ENCODE measurements at regions of chr5 and their contacts with region 1.

Region 1: DNA sequence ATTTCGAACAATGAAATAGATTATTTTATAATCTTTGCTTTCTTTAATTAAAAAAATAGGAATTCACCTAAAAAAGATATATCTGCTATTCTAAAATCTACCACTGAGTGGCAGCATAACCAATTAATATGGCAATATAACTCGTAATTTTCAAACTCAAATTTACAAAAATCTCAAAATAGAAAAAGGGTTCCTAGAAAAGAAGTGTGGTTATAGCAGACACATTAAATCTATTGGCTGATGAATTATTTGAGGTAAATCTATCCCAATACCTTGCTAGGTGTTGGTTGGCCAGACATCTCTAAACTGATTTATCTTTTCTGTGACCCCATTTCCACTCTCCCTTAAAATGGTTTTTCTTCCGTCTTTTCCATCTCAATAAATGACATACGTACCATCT is 30.2 kb upstream of the NRG2 start:
- DNase-seq: no peak
- H3K4me3 Mint-ChIP-seq: no peak overlapping the region
- H3K27ac Mint-ChIP-seq: no peak overlapping the region
- H3K4me1 Mint-ChIP-seq: no peaks in the 10 kb centered on the region
- H3K27me3 Mint-ChIP-seq: peaks cover 16% of the 10 kb centered on the region

Region 2: GRCh38 chr5:140038373-140038957 is 34.8 kb before region 1 on chr5:
- CTCF ChIA-PET with region 1: no interaction called
- POLR2A ChIA-PET with region 1: no interaction called
- intact Hi-C with region 1: no loop called
- DNase-seq: no peak
- H3K4me3 Mint-ChIP-seq: no peak overlapping the region
- H3K27ac Mint-ChIP-seq: no peak overlapping the region
- H3K4me1 Mint-ChIP-seq: peaks cover 16% of the 10 kb centered on the region
- H3K27me3 Mint-ChIP-seq: peaks cover 38% of the 10 kb centered on the region

Region 3: DNA sequence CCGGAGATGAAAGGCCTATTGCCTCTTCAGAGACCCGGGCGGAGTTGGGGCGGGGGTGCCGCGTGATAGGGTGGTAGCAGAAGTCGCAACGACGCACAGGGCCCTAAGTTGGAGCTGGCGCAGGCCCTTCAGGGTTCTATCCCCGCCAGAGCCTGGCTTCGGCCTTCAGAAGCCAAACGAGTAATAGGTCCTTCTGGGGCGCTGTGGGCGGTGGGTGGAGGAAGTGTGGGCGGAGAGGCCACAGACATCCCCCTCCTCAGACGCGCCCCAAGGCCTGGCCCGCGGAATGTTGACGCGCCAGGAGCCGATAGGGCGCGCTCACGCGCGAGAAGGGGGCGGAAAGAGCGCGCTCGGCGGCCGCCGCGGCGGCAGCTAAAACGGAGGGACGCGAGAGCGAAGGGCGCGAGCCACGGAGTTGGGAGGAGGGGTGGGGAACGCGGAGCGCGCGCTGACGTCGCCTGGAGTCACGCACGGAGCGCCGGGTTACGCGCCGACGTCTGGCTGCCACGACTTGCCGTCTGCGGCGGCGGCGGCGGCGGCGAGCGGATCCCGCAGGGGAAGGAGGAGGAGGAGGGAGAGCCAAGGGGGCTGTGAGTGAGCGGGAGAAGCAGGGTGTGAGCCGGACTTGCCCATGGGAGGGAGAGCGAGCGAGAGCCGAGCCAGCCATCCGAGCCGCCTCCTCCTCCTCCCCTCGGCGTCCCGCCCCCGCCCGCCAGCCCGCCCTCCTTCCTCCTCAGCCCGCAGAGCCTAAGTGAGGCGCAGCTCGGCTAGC is 34.2 kb after region 1 on chr5:
- CTCF ChIA-PET with region 1: interaction called, 8 read pairs
- POLR2A ChIA-PET with region 1: no interaction called
- intact Hi-C with region 1: loop called (anchors 5 kb)
- DNase-seq: peak; percentile 95
- H3K4me3 Mint-ChIP-seq: peak overlapping the region; percentile 98
- H3K27ac Mint-ChIP-seq: peak overlapping the region; percentile 94
- H3K4me1 Mint-ChIP-seq: peaks cover 43% of the 10 kb centered on the region
- H3K27me3 Mint-ChIP-seq: no peaks in the 10 kb centered on the region

Region 4: DNA sequence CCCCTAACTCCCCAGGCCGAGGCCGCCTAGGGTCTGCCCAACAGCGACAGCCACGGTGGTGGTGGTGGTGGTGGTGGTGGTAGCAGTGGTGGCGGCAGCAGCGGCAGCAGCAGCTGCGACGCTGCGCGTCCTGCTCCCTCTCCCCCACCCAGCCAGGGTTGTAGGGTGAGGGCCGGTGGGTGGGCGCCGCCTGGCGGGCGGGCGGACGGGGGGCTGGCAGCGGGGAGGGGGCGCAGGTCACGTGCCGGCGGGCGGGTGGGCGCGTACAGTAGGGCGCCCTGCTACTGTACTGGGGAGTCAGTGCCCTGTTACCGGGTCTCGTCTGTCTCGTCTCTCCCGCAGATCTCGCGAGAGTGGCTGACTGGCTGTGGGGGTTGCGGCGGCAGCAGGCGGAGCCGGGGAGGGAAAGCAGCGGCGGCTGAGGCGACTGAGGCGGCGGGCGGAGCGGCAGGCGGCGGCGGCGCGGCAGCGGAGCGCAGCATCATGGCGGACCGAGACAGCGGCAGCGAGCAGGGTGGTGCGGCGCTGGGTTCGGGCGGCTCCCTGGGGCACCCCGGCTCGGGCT is 40.5 kb after region 1 on chr5 and contains the start of gene PURA:
- CTCF ChIA-PET with region 1: interaction called, 5 read pairs
- POLR2A ChIA-PET with region 1: interaction called, 3 read pairs
- intact Hi-C with region 1: loop called (anchors 2 kb)
- DNase-seq: peak; percentile 97
- H3K4me3 Mint-ChIP-seq: peak within 1 kb of the TSS; percentile 83
- H3K27ac Mint-ChIP-seq: peak within 1 kb of the TSS; percentile 89
- H3K4me1 Mint-ChIP-seq: peaks cover 68% of the 10 kb centered on the region
- H3K27me3 Mint-ChIP-seq: no peaks in the 10 kb centered on the region
- total RNA-seq, gene PURA: 12.0 to 12.3 TPM

Region 5: DNA sequence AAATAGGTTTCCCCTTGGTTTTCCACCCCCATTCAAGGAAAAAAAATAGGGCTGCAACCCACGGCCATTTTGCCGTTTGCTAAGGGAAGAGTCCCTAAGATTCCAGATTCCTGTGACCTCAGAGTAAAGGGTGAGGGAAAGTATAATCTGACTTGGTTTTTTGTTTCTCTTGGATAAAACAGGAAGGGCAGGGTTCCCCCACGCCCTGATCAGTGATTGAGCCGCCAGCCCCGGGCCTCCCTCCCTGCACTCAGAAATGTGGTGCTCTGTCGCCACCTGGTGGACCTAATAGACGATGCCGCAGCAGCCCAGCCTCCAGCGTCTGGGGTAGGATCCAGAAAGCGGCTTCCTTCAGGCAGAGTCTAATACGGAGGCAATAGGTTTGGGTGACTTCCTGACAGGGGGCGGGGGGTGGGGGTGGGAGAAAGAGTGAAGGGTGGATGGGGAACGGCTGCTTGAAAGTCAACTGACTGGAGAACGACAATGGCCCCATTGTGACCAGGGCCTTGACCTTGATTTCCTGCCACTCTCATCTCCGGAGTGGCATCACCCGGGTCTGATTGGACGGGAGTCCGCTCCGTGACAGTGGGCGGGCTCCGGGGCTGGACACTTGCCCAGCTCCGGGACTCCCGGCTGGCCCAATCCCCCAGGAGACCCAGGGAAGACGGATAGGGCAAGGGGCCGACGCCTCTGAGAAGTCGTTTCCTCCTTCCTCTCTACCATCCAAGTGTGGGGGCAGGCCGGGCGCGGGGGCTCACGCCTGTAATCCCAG is 83.9 kb after region 1 on chr5:
- CTCF ChIA-PET with region 1: interaction called, 99 read pairs
- POLR2A ChIA-PET with region 1: no interaction called
- intact Hi-C with region 1: loop called (anchors 1 kb)
- DNase-seq: peak; percentile 92
- H3K4me3 Mint-ChIP-seq: peak overlapping the region; percentile 2
- H3K27ac Mint-ChIP-seq: no peak overlapping the region
- H3K4me1 Mint-ChIP-seq: peaks cover 10% of the 10 kb centered on the region
- H3K27me3 Mint-ChIP-seq: no peaks in the 10 kb centered on the region

Measured in activated CD4-positive, alpha-beta memory T cell treated with anti-CD3 and anti-CD28 coated beads for 36 hours (primary cell).